Activated CD4-positive, alpha-beta T cell treated with anti-CD3 and anti-CD28 coated beads for 36 hours (primary cell): ENCODE measurements at regions of chr14 and their contacts with region 1.

Region 1: DNA sequence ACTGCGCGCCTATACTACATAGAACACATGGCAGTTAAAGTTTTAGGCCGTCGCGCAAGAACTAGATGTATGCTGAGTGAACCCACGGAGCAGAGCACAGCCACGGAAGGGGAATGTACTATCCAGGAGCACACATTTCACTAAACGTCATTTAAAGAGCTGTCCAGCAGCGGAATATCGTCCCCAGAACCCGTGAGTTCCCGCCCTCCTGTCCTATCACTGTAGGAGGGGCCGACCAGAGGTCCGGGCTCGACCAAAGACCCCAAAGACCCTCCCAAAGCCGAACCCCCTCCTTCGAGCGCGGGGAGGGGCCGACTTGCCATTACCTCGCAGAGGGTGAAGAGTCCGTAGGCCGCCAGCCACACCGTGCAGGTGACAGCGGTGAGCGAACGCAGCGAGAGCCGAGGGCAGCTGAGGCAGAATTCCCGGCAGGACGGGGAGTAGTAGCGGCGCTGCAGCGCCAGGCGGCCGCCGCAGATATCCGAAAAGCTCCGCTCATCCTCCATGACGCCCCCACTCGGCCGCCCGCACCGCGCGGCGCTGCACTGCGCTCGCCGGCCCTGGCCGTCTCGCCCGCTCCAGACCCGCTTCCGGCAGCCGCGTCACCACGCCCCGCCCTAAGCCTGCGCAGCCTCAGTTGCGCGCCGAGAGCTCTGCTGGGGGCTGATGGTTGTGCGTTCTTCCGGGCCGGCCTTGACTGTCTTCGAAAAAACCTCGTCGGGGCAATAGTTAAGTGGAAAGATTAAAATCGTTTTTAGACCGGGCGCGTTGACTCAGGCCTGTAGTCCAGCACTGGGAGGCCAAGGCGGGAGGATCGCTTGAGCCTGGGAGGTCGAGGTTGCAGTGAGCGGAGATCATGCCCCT is at the start of gene PIGH:
- DNase-seq: peak; percentile 97
- ATAC-seq: peak; percentile 99
- H3K4me3 Mint-ChIP-seq: peak within 1 kb of the TSS; percentile 94
- H3K27ac Mint-ChIP-seq: peak within 1 kb of the TSS; percentile 94
- H3K4me1 Mint-ChIP-seq: peaks cover 34% of the 10 kb centered on the region
- H3K27me3 Mint-ChIP-seq: no peaks in the 10 kb centered on the region
- total RNA-seq, gene PIGH: 14.9 to 21.4 TPM

Region 2: DNA sequence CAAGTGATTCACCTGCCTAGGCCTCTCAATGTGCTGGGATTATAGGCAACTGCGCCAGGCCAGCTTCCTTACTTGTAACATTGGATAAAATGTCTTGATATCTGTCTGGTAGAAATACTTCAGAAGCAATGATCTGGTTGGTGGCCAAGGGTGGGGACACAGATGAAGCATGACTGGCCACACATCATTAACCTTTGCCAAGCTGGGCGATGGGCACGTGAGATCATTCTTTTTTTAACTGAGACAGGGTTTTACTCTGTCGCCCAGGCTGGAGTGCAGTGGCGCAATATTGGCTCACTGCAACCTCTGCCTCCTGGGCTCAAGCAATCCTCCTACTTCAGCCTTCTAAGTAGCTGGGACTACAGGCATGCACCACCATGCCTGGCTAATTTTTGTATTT is 35.7 kb before region 1 on chr14:
- CTCF ChIA-PET with region 1: no interaction called
- POLR2A ChIA-PET with region 1: no interaction called
- intact Hi-C with region 1: no loop called
- DNase-seq: no peak
- ATAC-seq: no peak
- H3K4me3 Mint-ChIP-seq: no peak overlapping the region
- H3K27ac Mint-ChIP-seq: no peak overlapping the region
- H3K4me1 Mint-ChIP-seq: no peaks in the 10 kb centered on the region
- H3K27me3 Mint-ChIP-seq: no peaks in the 10 kb centered on the region

Region 3: DNA sequence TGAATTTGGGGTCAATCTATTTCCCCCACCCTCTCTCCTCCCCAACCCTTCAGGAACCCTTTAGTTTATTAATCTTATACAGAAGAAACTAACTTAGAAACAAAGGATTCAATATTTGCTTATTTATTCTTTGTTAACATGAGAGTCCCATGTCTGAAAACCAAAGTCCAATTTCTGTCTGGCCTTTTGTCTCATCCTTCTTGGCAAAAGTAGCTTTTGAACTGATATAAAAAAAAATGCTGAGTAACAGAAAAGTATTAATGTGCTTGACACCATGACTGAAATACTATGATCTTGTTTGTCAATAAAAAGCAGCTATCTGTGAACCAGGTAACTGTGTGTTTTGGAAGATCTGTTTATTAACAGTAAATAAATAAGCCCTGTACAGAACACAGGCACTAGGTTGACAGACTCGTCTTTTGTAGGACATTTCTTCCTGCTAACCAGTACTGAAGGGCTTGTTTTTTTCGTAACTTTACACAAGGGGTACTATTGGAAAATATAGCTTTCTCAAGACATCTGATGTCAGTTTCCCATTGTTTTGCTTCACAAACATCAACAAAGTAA is 10.6 kb before region 1 on chr14:
- CTCF ChIA-PET with region 1: interaction called, 22 read pairs
- POLR2A ChIA-PET with region 1: interaction called, 6 read pairs
- intact Hi-C with region 1: no loop called
- DNase-seq: no peak
- ATAC-seq: no peak
- H3K4me3 Mint-ChIP-seq: no peak overlapping the region
- H3K27ac Mint-ChIP-seq: no peak overlapping the region
- H3K4me1 Mint-ChIP-seq: no peaks in the 10 kb centered on the region
- H3K27me3 Mint-ChIP-seq: no peaks in the 10 kb centered on the region

Region 4: DNA sequence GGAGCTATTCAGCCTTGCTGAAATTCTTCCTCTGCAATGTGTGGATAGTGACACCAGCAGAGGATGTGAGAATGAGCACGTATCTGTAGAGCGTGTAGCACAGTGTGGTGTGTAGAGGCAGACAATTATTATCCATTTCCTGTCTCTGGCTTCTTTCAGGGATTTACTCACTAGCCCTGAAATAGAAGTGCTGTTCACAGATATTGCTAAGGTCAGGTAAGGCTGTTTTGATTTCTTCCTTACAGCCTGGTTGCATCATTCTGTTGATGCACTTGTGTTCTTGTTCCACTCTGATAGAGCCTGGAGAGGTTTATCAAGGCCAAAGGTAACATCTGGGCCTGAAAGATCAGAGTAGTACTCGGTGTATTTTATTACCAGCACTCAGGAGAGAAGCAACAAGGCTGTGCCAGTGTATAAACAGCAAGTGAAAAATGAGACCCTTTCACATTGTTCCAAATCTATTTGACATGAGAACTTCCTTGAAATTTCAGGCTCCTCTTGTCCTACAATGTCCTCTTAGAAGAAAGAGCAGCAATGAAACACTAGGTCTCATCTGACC is 36.5 kb after region 1 on chr14:
- CTCF ChIA-PET with region 1: no interaction called
- POLR2A ChIA-PET with region 1: no interaction called
- intact Hi-C with region 1: loop called in 1 of 2 experiments (anchors 1 kb)
- DNase-seq: peak; percentile 8
- ATAC-seq: peak; percentile 95
- H3K4me3 Mint-ChIP-seq: no peak overlapping the region
- H3K27ac Mint-ChIP-seq: peak overlapping the region; percentile 58
- H3K4me1 Mint-ChIP-seq: peaks cover 3% of the 10 kb centered on the region
- H3K27me3 Mint-ChIP-seq: no peaks in the 10 kb centered on the region

Region 5: GRCh38 chr14:67674481-67675169 is 74.7 kb after region 1 on chr14 and contains the start of gene VTI1B:
- CTCF ChIA-PET with region 1: interaction called, 6 read pairs
- POLR2A ChIA-PET with region 1: no interaction called
- intact Hi-C with region 1: loop called in 1 of 2 experiments (anchors 1 kb)
- DNase-seq: peak; percentile 83
- ATAC-seq: peak; percentile 94
- H3K4me3 Mint-ChIP-seq: peak within 1 kb of the TSS; percentile 81
- H3K27ac Mint-ChIP-seq: peak within 1 kb of the TSS; percentile 82
- H3K4me1 Mint-ChIP-seq: peaks cover 32% of the 10 kb centered on the region
- H3K27me3 Mint-ChIP-seq: no peaks in the 10 kb centered on the region
- total RNA-seq, gene VTI1B: 42.0 to 58.3 TPM

Region 6: GRCh38 chr14:67704484-67705089 is 104.7 kb after region 1 on chr14:
- CTCF ChIA-PET with region 1: interaction called, 39 read pairs
- POLR2A ChIA-PET with region 1: interaction called, 3 read pairs
- intact Hi-C with region 1: no loop called
- DNase-seq: peak; percentile 35
- ATAC-seq: peak; percentile 87
- H3K4me3 Mint-ChIP-seq: no peak overlapping the region
- H3K27ac Mint-ChIP-seq: no peak overlapping the region
- H3K4me1 Mint-ChIP-seq: no peaks in the 10 kb centered on the region
- H3K27me3 Mint-ChIP-seq: peaks cover 3% of the 10 kb centered on the region

Region 7: GRCh38 chr14:68734231-68734775 is 1134.4 kb after region 1 on chr14:
- CTCF ChIA-PET with region 1: no interaction called
- POLR2A ChIA-PET with region 1: no interaction called
- intact Hi-C with region 1: no loop called
- DNase-seq: peak; percentile 61
- ATAC-seq: peak; percentile 59
- H3K4me3 Mint-ChIP-seq: no peak overlapping the region
- H3K27ac Mint-ChIP-seq: peak overlapping the region; percentile 85
- H3K4me1 Mint-ChIP-seq: peaks cover 47% of the 10 kb centered on the region
- H3K27me3 Mint-ChIP-seq: no peaks in the 10 kb centered on the region